ENCODE measurements at regions of chr19 and their contacts with region 1.

Region 1: DNA sequence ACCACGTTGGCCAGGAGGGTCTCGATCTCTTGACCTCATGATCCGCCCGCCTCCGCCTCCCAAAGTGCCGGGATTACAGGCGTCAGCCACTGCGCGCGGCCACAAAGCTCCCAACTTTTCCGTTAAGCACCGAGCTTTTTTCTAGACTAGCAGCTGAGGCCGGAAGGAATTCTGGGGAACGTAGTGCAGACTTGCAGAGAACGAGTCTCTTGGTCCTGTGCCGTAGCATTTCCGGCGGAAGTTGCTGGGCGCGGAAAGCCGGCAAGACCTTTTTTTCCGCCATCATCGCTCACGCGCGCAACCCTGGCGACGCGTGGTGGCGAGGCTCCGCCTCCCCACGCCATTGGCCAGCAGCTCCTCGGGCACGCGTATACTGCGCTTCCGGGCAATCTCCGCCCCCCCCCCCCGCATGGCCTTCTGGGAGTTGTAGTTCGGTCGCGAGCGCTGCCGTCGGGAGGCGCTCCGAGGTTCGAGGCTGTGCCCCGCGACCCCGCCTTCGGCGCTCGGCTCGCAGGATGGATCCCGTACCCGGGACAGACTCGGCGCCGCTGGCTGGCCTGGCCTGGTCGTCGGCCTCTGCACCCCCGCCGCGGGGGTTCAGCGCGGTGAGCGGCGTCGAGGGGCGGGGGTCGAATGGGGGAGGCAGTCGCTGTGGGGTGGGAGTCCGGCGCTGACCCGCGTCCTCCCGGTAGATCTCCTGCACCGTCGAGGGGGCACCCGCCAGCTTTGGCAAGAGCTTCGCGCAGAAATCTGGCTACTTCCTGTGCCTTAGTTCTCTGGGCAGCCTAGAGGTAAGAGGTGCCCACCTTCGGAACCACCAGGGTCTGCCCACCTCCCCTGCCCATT is at the start of gene MVB12A:
- DNase-seq: peak; percentile 90 to 99
- H3K4me3 ChIP-seq: peak within 1 kb of the TSS; percentile 57 to 88 (median 78)
- H3K27ac ChIP-seq: peak within 1 kb of the TSS; percentile 62; the same call in 1 of the 2 replicates
- H3K4me1 ChIP-seq: peaks cover 3 to 15% (median 9%) of the 10 kb centered on the region in 4 experiments
- H3K27me3 ChIP-seq: peaks cover 0 to 3% (median 0%) of the 10 kb centered on the region in 4 experiments; a peak in 2 of 7 replicates
- CTCF ChIP-seq: no peak
- EP300 ChIP-seq: peak in 1 of 2 experiments; percentile 6; a peak in 1 of 3 replicates
- POLR2A ChIP-seq: 0 out of 3 replicates have a peak, but pooled peaks of 1 of the 2 experiments have one; percentile 49
- RAD21 ChIP-seq: no peak
- total RNA-seq, gene MVB12A: 36.8 and 37.9 TPM in 2 replicates

Region 2: GRCh38 chr19:17405250-17406038 is 14.4 kb before region 1 on chr19 and contains the start of gene BST2:
- CTCF ChIA-PET with region 1: interaction called, 4 read pairs
- POLR2A ChIA-PET with region 1: interaction called, 44 read pairs
- DNase-seq: no peak
- H3K4me3 ChIP-seq: peak within 1 kb of the TSS; percentile 39 to 75 (median 58); a peak in 7 of 8 replicates
- H3K27ac ChIP-seq: peak within 1 kb of the TSS; percentile 81
- H3K4me1 ChIP-seq: peaks cover 4 to 23% (median 13%) of the 10 kb centered on the region in 4 experiments
- H3K27me3 ChIP-seq: no peaks in the 10 kb centered on the region
- CTCF ChIP-seq: no peak
- EP300 ChIP-seq: no peak
- POLR2A ChIP-seq: peak in 1 of 2 experiments; percentile 40; a peak in 1 of 3 replicates
- RAD21 ChIP-seq: no peak
- total RNA-seq, gene BST2: 16.8 and 18.1 TPM in 2 replicates

Measured in H1 (cell line).